ENCODE measurements at regions of chr11 and their contacts with region 1.

Region 1: DNA sequence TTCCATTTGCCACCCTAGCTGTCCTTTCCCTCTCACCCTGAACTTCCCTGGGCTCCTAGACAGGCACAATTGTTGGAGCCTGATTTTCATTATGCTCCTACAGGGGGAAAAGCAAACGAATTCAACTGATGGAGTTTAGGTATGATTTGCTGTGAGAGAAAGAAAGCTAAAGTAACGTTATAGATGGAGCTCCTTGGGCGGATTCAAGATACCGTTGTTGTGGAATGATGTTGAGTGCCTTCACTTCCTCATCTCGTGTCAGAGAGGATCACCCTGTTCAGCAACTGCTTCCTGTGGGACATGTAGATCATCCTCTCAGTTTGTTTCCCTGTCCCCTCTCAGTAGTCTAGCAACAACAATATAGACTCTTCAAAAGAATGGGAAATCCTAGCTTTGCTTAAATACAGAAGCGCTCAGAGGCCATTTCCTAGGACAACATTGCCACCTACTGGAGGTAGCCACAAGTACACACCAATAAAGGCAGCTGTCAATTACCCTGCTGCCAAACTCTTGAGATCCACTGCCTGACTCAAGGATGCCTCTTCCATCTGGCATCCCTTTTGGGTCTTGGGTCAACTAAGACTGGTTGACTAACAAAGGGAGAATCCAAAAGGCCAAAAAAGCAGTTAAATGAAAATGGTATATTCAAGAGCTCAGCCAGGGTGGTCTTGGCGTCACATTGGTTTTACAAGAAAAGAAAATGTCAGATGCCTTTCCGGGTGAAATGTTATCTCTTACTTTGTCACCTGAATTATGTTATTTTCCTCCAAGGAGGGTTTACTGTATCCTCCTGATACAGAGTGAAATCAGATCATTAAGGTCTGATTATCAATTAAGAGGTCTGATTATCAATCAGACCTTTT is 13.5 kb upstream of the DTX4 start:
- DNase-seq: peak in 1 of 2 donors; percentile 49
- ATAC-seq: peak; percentile 67 to 88 (median 74)
- H3K4me3 ChIP-seq: no peak overlapping the region
- H3K27ac ChIP-seq: no peak overlapping the region
- H3K4me1 ChIP-seq: no peaks in the 10 kb centered on the region
- H3K27me3 ChIP-seq: no peaks in the 10 kb centered on the region
- CTCF ChIP-seq: peak; percentile 82

Region 2: DNA sequence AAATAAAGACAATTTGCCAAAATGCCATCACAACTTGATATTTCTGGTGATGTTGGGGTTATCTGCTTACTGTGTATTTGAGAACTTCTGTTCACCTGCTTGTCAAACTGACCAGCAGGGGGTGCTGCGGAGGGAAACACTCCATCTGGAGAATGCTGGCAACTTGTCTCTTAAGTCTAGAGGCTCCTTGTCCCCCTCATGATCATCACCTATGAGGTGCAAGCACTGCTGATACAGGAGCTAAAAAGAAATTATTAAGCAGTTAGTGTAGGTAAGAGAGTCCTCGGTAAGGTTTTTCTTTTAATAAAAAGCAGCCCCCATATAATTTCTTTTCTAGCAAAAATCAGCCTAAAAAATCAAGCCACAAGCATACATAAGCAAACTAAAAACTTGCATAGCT is 105.0 kb before region 1 on chr11:
- intact Hi-C with region 1: loop called in 1 of 2 experiments (anchors 5 kb)
- DNase-seq: peak; percentile 62 to 72
- ATAC-seq: no peak
- H3K4me3 ChIP-seq: no peak overlapping the region
- H3K27ac ChIP-seq: no peak overlapping the region
- H3K4me1 ChIP-seq: no peaks in the 10 kb centered on the region
- H3K27me3 ChIP-seq: peaks cover 0 to 3% (median 0%) of the 10 kb centered on the region in 3 donors
- CTCF ChIP-seq: peak; percentile 61

Region 3: DNA sequence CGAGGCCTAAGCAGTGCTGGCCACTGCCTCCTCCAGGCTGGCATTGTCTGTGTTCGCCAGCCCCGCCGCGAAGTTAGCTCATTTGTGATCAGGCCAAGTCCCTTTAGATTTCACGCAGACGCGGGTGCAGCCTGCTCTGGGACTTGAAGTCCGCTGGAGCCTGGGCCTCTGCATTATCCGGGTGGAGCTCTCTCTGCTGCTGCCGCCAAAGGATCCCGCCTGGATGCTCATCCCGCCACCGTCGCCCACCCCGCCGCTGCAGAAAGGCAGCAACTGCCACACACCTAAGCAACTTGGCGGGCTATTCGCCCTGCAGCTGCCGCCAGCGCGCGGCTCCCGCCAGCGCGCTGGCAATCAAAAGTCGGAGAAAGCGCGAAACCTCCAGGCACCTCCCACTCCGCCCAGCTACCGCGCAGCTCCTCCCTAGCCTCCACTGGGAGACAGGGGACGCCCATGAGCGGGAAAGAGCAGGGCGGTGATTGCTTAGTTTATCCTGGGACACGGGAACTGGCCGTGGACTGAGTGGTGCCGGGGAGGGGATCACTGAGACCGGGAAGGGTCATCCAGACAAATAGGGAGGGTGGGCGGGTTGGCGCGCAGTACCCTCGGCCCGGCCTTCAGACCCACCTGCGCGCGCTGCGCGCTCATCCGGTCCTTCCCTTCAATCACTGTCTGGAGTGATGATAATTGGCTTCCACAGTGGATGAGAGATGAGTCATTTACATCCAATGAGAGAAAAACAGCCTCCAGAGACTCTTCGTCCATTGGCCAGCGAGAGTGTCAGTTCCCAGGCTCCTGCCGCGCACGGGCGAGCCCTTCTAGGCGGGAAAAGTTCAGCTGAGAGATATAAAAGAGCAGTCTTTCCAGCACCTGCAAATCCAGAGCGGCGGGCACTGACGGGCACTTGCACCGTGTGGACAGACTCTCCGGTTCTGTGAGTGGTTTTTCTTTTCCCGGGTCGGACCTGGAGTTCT is 51.8 kb before region 1 on chr11 and contains the start of gene FAM111B:
- intact Hi-C with region 1: loop called in 1 of 2 experiments (anchors 10 kb)
- DNase-seq: peak; percentile 74 to 84
- ATAC-seq: peak; percentile 80 to 96 (median 90)
- H3K4me3 ChIP-seq: peak within 1 kb of the TSS; percentile 66
- H3K27ac ChIP-seq: no peak within 1 kb of the TSS
- H3K4me1 ChIP-seq: peaks cover 5% of the 10 kb centered on the region
- H3K27me3 ChIP-seq: peaks cover 0 to 29% (median 8%) of the 10 kb centered on the region in 3 donors
- CTCF ChIP-seq: no peak
- total RNA-seq, gene FAM111B: 0.06 to 0.09 TPM in 2 of 4 donors, not detected in the others

Region 4: GRCh38 chr11:59197991-59198390 is 39.6 kb after region 1 on chr11:
- intact Hi-C with region 1: no loop called
- DNase-seq: peak; percentile 65 to 82
- ATAC-seq: peak; percentile 39 to 69 (median 57)
- H3K4me3 ChIP-seq: no peak overlapping the region
- H3K27ac ChIP-seq: no peak overlapping the region
- H3K4me1 ChIP-seq: no peaks in the 10 kb centered on the region
- H3K27me3 ChIP-seq: peaks cover 0 to 3% (median 0%) of the 10 kb centered on the region in 3 donors
- CTCF ChIP-seq: no peak

Measured in psoas muscle (tissue), 8 donors.